CD8-positive, alpha-beta T cell (primary cell): ENCODE measurements at regions of chr2 and their contacts with region 1.

Region 1: DNA sequence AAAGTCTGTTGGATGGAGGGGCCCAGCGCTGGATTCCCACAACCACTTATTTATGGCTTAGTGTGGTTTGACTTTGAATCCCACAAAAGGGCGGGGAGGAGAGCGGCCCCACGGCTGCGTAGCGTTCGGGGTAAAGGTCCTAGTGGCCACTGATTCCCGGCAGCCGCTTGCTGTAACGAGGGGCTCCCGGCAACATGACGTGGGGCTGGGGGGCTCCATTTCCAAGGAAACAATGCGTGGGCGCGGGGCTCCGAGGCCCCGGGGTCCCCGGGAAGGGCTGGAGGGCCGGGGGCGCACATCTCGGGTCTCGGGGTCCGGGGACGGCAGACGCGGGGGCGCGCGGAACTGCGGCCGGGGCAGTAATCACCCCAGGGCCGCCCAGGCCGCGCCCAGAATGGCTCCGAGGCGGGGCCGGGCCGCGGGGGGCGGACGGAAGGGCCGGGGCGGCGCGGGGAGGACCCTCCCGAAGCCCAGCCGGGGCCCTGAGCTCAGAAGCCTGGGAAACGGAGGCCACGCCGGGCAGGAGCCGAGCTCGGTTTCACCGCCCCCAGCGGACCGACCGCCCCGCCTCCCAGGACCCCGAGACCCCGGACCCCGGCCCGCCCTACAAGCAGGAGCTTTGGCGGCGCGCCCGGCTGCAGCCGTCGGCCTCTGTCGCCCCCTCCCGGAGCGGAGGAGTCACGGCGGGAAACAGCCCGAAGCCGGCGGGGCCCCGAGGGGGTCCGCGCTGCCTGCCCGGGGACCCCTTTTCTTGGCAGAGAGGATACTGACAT is 11.9 kb upstream of the MLPH start:
- DNase-seq: peak; percentile 60 to 91 (median 77)
- ATAC-seq: peak; percentile 86
- H3K4me3 ChIP-seq: peak overlapping the region; percentile 34 to 61
- H3K4me3 Mint-ChIP-seq: peak overlapping the region; percentile 84
- H3K27ac ChIP-seq: peak overlapping the region; percentile 39 to 52
- H3K27ac Mint-ChIP-seq: peak overlapping the region; percentile 86
- H3K4me1 ChIP-seq: peaks cover 16% of the 10 kb centered on the region
- H3K4me1 Mint-ChIP-seq: peaks cover 18% of the 10 kb centered on the region
- H3K27me3 ChIP-seq: peaks cover 0 to 4% of the 10 kb centered on the region in 2 experiments
- H3K27me3 Mint-ChIP-seq: peaks cover 22% of the 10 kb centered on the region
- CTCF ChIP-seq: peak; percentile 97

Region 2: DNA sequence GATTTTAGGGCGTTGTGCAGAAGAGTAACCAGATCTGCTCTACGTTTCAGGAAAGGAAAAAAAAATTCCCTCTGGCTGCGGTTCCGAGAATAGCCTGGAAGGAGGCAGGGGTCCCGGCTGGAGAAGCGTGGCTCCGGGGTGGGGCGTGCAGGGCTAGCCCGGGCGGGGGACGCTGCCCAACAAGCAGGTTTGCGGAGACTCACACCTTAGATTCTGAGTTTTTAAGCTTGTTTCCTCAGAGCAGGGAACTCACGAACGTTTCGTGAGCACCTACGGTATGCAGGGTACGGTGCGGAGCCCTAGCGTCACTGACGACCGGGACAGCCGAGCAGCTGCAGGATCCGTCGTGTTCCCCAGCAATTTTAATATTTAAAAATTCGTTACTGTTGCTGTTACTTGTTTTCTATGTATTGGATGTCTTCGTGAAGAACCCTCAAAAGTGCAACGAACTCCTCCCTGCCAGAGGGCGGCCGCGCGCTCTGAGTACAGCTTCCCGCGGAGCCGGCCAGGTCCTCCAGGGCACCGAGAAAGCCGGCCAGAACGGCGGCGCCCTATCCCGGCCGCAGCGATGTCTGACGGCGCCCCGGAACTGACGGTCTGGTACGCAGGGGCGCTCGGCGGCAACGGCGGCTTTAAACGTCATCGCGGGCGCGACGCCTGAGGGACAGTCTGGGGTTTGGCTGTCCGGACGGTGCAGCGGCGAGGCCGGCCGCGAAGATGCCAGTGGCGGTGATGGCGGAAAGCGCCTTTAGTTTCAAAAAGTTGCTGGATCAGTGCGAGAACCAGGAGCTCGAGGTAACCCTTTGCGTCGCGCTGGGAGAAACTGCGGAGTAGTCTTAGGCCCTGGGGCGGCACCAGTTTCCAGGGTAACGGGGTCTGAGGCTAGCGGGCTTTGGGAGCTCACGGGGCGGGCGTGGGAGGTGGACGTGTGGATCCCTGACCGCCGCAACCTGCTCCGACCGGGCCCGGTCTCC is 389.6 kb before region 1 on chr2 and contains the start of gene COPS8:
- CTCF ChIA-PET with region 1: interaction called, 6 read pairs
- POLR2A ChIA-PET with region 1: no interaction called
- intact Hi-C with region 1: loop called in 1 of 2 experiments (anchors 5 kb)
- DNase-seq: peak; percentile 80 to 94 (median 90)
- ATAC-seq: peak; percentile 98
- H3K4me3 ChIP-seq: peak within 1 kb of the TSS; percentile 78 to 80
- H3K4me3 Mint-ChIP-seq: peak within 1 kb of the TSS; percentile 100
- H3K27ac ChIP-seq: peak within 1 kb of the TSS; percentile 88 to 91
- H3K27ac Mint-ChIP-seq: peak within 1 kb of the TSS; percentile 100
- H3K4me1 ChIP-seq: peaks cover 23% of the 10 kb centered on the region
- H3K4me1 Mint-ChIP-seq: peaks cover 39% of the 10 kb centered on the region
- H3K27me3 ChIP-seq: no peaks in the 10 kb centered on the region
- H3K27me3 Mint-ChIP-seq: no peaks in the 10 kb centered on the region
- CTCF ChIP-seq: peak; percentile 40
- total RNA-seq, gene COPS8: 53.2 to 56.3 TPM

Region 3: DNA sequence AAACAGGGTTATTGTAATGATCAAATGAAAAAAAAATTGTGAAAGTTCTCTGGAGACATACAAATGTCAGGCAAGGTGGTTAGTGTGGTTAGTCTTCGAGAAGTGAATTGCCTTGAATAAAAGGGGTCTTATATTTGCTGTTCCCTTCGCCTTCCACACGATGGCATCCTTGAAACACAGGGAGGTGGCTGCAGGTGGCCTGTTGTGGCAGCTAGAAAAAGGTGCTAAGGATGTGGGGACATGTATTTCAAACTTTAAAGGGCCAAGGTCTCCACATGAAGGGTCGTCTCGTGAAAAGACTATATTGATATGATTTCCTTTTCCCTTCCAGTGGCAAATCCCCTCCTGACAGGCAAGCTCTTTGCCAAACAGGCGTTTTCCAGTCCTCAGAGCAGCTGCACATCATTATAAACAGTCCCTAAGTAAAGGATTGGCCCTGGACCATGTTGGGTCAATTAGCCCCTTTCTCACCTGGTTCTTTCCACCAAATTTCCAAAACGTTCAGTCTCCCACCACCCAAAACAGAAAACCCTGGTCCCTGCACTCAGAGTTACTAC is 321.0 kb before region 1 on chr2:
- CTCF ChIA-PET with region 1: interaction called, 54 read pairs
- POLR2A ChIA-PET with region 1: no interaction called
- intact Hi-C with region 1: loop called (anchors 1 kb)
- DNase-seq: peak in 8 of 9 experiments; percentile 34 to 75 (median 54)
- ATAC-seq: peak; percentile 81
- H3K4me3 ChIP-seq: no peak overlapping the region
- H3K4me3 Mint-ChIP-seq: no peak overlapping the region
- H3K27ac ChIP-seq: no peak overlapping the region
- H3K27ac Mint-ChIP-seq: no peak overlapping the region
- H3K4me1 ChIP-seq: peaks cover 14% of the 10 kb centered on the region
- H3K4me1 Mint-ChIP-seq: peaks cover 20% of the 10 kb centered on the region
- H3K27me3 ChIP-seq: no peaks in the 10 kb centered on the region
- H3K27me3 Mint-ChIP-seq: no peaks in the 10 kb centered on the region
- CTCF ChIP-seq: peak; percentile 59

Region 4: GRCh38 chr2:237413777-237414661 is 61.1 kb before region 1 on chr2 and contains the start of gene COL6A3:
- CTCF ChIA-PET with region 1: interaction called, 230 read pairs
- POLR2A ChIA-PET with region 1: no interaction called
- intact Hi-C with region 1: no loop called
- DNase-seq: no peak
- ATAC-seq: no peak
- H3K4me3 ChIP-seq: no peak within 1 kb of the TSS
- H3K4me3 Mint-ChIP-seq: no peak within 1 kb of the TSS
- H3K27ac ChIP-seq: no peak within 1 kb of the TSS
- H3K27ac Mint-ChIP-seq: no peak within 1 kb of the TSS
- H3K4me1 ChIP-seq: no peaks in the 10 kb centered on the region
- H3K4me1 Mint-ChIP-seq: no peaks in the 10 kb centered on the region
- H3K27me3 ChIP-seq: no peaks in the 10 kb centered on the region
- H3K27me3 Mint-ChIP-seq: no peaks in the 10 kb centered on the region
- CTCF ChIP-seq: no peak
- total RNA-seq, gene COL6A3: 1.7 TPM

Region 5: DNA sequence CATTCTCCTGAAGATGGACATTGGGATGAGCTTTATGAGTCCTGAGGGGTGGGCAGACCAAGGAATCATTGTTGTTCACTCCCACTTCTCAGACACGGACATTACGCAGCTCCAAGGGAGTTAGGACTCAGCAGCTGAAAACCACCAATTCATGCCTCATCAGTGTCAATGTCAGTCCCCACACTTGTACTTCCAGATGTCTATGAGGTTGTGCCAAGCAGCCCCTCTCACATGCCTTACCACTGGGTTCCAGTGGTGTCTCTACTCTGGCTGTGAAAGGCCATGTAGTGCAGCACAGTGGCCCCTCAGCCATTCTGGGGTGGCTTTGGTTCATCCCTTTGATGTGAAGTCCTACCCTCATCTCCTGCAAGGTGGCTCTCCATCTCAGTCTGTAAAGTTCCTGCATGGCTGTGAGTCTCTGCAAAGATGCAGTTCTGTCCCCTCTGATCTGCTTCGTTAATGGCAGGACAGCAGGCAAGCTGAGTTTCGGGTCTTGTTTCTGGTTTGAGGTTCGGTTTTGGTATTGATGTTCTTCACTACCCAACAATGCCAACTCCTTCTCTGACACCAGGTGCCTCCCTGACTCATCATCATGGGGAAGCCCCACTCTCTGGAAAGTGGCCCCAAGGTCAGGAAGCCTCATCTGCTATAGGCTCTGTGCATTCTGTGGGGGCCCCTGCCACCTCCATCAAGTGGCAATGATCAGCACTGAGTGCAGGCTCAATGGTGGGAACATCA is 47.2 kb before region 1 on chr2:
- CTCF ChIA-PET with region 1: interaction called, 230 read pairs
- POLR2A ChIA-PET with region 1: interaction called, 31 read pairs
- intact Hi-C with region 1: no loop called
- DNase-seq: peak in 8 of 9 experiments; percentile 32 to 71 (median 62)
- ATAC-seq: peak; percentile 49
- H3K4me3 ChIP-seq: no peak overlapping the region
- H3K4me3 Mint-ChIP-seq: peak overlapping the region; percentile 1
- H3K27ac ChIP-seq: no peak overlapping the region
- H3K27ac Mint-ChIP-seq: peak overlapping the region; percentile 85
- H3K4me1 ChIP-seq: peaks cover 55% of the 10 kb centered on the region
- H3K4me1 Mint-ChIP-seq: peaks cover 79% of the 10 kb centered on the region
- H3K27me3 ChIP-seq: no peaks in the 10 kb centered on the region
- H3K27me3 Mint-ChIP-seq: no peaks in the 10 kb centered on the region
- CTCF ChIP-seq: no peak

Region 6: DNA sequence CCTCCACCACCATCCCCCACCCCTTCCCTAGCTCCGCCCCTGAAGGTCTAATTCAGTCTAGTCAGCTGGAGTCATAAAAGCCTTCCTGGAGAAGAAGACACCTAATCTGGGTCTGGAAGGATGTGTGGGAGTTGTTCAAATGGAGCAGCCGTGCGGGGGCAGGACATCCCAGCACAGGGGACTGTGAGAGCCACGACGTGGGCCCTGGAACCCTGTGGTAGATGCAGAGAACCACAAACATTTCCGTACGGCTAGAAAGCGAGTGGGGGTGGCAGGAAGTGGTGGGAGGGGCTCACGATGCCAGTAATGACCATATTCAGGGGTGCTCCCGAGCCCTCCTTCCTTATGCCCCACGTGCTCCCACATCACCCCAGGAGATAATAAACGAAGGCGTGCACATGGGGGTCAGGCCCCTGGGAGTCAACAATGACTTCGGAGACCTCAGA is 40.2 kb before region 1 on chr2:
- CTCF ChIA-PET with region 1: interaction called, 52 read pairs
- POLR2A ChIA-PET with region 1: interaction called, 11 read pairs
- intact Hi-C with region 1: loop called in 1 of 2 experiments (anchors 5 kb)
- DNase-seq: peak; percentile 26 to 87 (median 78)
- ATAC-seq: peak; percentile 54
- H3K4me3 ChIP-seq: peak overlapping the region; percentile 22 to 56
- H3K4me3 Mint-ChIP-seq: peak overlapping the region; percentile 79
- H3K27ac ChIP-seq: peak overlapping the region; percentile 0 to 44
- H3K27ac Mint-ChIP-seq: peak overlapping the region; percentile 96
- H3K4me1 ChIP-seq: peaks cover 90% of the 10 kb centered on the region
- H3K4me1 Mint-ChIP-seq: peaks cover 86% of the 10 kb centered on the region
- H3K27me3 ChIP-seq: no peaks in the 10 kb centered on the region
- H3K27me3 Mint-ChIP-seq: no peaks in the 10 kb centered on the region
- CTCF ChIP-seq: no peak

Region 7: GRCh38 chr2:237441605-237442274 is 33.4 kb before region 1 on chr2:
- CTCF ChIA-PET with region 1: interaction called, 11 read pairs
- POLR2A ChIA-PET with region 1: no interaction called
- intact Hi-C with region 1: loop called in 1 of 2 experiments (anchors 5 kb)
- DNase-seq: peak in 4 of 9 experiments; percentile 25 to 69 (median 48)
- ATAC-seq: peak; percentile 90
- H3K4me3 ChIP-seq: no peak overlapping the region
- H3K4me3 Mint-ChIP-seq: peak overlapping the region; percentile 29
- H3K27ac ChIP-seq: no peak overlapping the region
- H3K27ac Mint-ChIP-seq: peak overlapping the region; percentile 74
- H3K4me1 ChIP-seq: peaks cover 51% of the 10 kb centered on the region
- H3K4me1 Mint-ChIP-seq: peaks cover 59% of the 10 kb centered on the region
- H3K27me3 ChIP-seq: no peaks in the 10 kb centered on the region
- H3K27me3 Mint-ChIP-seq: no peaks in the 10 kb centered on the region
- CTCF ChIP-seq: no peak